ENCODE measurements at regions of chrX and their contacts with region 1.

Region 1: GRCh38 chrX:95764972-95765451 is 919.6 kb upstream of the DIAPH2 start:
- DNase-seq: no peak
- H3K4me3 ChIP-seq: no peak overlapping the region
- H3K27ac ChIP-seq: no peak overlapping the region
- H3K4me1 ChIP-seq: no peaks in the 10 kb centered on the region
- H3K27me3 ChIP-seq: no peaks in the 10 kb centered on the region
- CTCF ChIP-seq: peak; percentile 47

Region 2: DNA sequence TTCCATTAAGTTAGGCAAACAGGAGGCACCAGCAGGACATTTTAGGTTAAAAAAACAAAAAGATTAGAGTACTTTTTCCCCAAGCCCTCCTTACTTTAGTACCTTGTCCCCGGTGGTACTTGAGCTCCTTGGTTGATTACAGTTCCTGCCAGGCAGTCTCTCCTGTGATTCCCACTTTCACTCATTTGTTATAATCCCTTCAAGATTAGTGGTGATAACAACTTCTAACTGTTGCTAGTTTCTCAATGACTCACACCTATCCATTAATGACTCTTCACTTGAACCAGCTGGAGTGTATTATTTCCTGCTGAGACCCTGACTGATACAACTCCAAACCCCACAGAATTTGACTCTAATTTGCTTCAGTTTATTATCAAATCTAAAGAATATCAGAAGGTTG is 154.6 kb after region 1 on chrX:
- intact Hi-C with region 1: loop called (anchors 10 kb)
- DNase-seq: no peak
- H3K4me3 ChIP-seq: no peak overlapping the region
- H3K27ac ChIP-seq: no peak overlapping the region
- H3K4me1 ChIP-seq: no peaks in the 10 kb centered on the region
- H3K27me3 ChIP-seq: no peaks in the 10 kb centered on the region
- CTCF ChIP-seq: no peak

Region 3: GRCh38 chrX:96176921-96177320 is 411.9 kb after region 1 on chrX:
- intact Hi-C with region 1: loop called (anchors 10 kb)
- DNase-seq: no peak
- H3K4me3 ChIP-seq: no peak overlapping the region
- H3K27ac ChIP-seq: no peak overlapping the region
- H3K4me1 ChIP-seq: no peaks in the 10 kb centered on the region
- H3K27me3 ChIP-seq: no peaks in the 10 kb centered on the region
- CTCF ChIP-seq: no peak